H1 (cell line): ENCODE measurements at regions of chr16 and their contacts with region 1.

Region 1: DNA sequence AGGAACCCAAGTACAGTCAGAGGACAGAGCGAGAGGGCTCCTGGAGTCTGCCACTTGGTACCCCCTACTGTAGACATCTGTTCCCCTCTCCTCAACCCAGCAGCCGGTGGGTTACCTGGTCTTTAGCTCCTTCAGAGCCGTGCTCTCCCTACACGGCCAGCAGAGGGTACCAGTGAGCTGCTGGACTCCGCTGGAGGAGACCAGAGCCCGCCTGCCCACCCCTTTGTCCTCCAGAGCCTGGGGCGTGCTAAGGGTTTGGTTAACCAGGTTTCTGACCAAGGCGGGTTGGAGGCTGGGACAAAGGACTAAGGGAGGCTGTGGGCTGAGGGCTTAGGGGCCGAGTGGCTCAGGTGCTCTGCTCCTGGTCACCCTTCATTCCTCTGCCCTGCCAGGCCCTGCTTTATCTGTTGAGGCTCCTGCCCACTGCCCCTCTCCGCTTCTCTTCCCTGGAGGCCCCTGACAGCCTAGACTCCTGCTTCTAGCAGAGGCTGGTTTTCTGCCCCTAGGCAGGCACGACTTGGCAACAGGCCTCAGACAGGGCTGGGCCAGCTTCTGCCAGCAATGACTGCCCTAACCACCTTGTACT is 2.7 kb upstream of the HSD11B2 start:
- DNase-seq: peak; percentile 71 to 90
- H3K4me3 ChIP-seq: no peak overlapping the region
- H3K27ac ChIP-seq: no peak overlapping the region
- H3K4me1 ChIP-seq: peaks cover 21 to 57% (median 45%) of the 10 kb centered on the region in 4 experiments
- H3K27me3 ChIP-seq: peaks cover 0 to 19% (median 15%) of the 10 kb centered on the region in 4 experiments; a peak in 6 of 7 replicates
- CTCF ChIP-seq: peak; percentile 96
- EP300 ChIP-seq: no peak
- POLR2A ChIP-seq: no peak
- RAD21 ChIP-seq: peak; percentile 78 to 89

Region 2: DNA sequence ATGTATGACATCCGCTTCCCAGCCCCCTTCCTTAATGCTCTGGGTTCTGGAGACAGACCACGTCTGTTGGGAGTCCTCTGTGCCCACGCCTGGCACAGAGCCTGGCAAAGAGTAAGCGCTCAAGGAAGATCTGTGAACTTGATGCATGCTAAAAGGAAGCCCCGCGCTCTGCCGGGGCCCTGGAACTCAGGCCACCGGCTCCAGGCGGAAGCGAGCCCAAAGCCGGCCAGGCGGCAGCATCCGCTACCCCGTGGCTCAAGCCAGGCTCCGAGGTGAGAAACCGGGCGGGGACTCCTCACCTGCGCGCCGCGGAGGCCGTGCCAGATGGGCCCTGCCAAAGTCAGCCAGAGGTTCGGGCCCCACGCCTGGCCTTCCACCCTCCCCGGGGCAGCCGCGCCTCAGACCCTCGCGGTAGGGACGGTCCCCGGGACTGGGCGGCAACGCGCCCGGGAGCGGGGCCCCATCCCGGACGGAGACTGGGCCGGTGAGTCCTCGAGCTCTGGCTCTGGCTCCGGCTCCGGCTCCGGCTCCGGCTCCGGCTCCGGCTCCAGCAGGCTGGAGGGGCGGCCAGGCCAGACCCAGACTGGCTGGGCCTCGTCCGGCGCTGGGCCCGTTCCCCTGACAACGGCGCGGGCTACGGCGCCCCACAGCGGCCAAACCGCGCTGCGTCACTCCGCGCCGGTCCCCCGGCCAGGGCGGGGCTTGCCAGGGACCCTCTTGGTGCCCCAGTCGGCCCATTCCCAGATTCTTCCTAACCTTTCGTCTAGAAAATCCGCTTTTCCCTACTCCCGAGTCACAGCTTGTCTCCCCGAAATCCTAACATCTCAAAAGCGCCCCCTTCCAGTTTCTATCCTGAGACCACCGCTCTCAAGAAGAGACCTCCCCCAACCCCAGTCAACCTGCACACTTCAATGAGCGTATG is 12.1 kb before region 1 on chr16 and contains the start of gene ZDHHC1:
- CTCF ChIA-PET with region 1: interaction called, 476 read pairs
- POLR2A ChIA-PET with region 1: interaction called, 16 read pairs
- DNase-seq: peak in 1 of 2 experiments; percentile 94
- H3K4me3 ChIP-seq: peak within 1 kb of the TSS; percentile 40 to 66 (median 54)
- H3K27ac ChIP-seq: no peak within 1 kb of the TSS
- H3K4me1 ChIP-seq: peaks cover 0 to 10% (median 5%) of the 10 kb centered on the region in 4 experiments; a peak in 4 of 7 replicates
- H3K27me3 ChIP-seq: no peaks in the 10 kb centered on the region; a peak in 2 of 7 replicates
- CTCF ChIP-seq: peak; percentile 62 to 77 (median 66)
- EP300 ChIP-seq: no peak
- POLR2A ChIP-seq: peak in 1 of 2 experiments; percentile 37; a peak in 1 of 3 replicates
- RAD21 ChIP-seq: peak; percentile 54 to 65
- total RNA-seq, gene ZDHHC1: 3.1 and 3.5 TPM in 2 replicates

Region 3: GRCh38 chr16:67447508-67448076 is 19.4 kb after region 1 on chr16:
- CTCF ChIA-PET with region 1: interaction called, 683 read pairs
- POLR2A ChIA-PET with region 1: interaction called, 67 read pairs
- DNase-seq: peak in 1 of 2 experiments; percentile 77
- H3K4me3 ChIP-seq: no peak overlapping the region
- H3K27ac ChIP-seq: no peak overlapping the region
- H3K4me1 ChIP-seq: peaks cover 0 to 8% (median 4%) of the 10 kb centered on the region in 4 experiments; a peak in 5 of 7 replicates
- H3K27me3 ChIP-seq: no peaks in the 10 kb centered on the region
- CTCF ChIP-seq: peak; percentile 57 to 63 (median 59)
- EP300 ChIP-seq: no peak
- POLR2A ChIP-seq: no peak
- RAD21 ChIP-seq: peak; percentile 40 to 66; a peak in 3 of 4 replicates

Region 4: DNA sequence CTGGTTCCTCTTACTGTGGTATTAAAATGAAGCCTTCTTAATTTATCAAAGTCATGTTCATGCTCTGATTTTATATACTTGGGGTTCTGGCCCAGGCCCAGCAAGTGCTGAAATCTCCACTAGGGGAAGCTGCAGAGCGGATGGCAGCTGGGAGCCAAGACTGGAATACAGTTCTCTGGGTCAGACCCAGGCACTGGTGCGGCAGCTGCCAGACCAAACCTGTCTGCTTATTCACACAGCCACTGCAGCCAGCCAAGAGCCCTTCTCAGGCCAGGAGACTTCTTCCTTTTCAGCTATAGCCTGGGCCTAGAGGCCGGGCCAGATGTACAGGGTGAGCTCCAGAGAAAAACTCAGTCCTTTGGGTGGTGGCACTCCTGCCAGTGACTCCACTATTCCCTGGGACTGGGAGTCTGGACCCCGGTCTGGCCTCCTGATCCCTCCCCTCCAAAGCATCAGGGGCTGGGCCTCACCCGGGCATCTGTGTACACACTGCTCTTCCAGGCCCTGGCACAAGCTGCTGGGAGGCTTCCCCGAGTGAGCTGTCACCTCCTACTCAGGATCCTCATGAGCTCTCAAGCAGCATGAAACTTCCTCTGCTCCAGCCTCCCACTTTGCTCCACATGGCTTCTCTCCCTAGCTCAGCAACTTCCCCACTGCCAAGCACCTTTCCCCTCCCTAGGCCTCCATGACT is 28.3 kb after region 1 on chr16:
- CTCF ChIA-PET with region 1: interaction called, 683 read pairs
- POLR2A ChIA-PET with region 1: interaction called, 4 read pairs
- DNase-seq: no peak
- H3K4me3 ChIP-seq: no peak overlapping the region
- H3K27ac ChIP-seq: peak overlapping the region; percentile 22; the same call in 1 of the 2 replicates
- H3K4me1 ChIP-seq: no peaks in the 10 kb centered on the region; a peak in 1 of 7 replicates
- H3K27me3 ChIP-seq: no peaks in the 10 kb centered on the region
- CTCF ChIP-seq: peak; percentile 57 to 65 (median 62)
- EP300 ChIP-seq: no peak
- POLR2A ChIP-seq: no peak
- RAD21 ChIP-seq: peak in 1 of 2 experiments; percentile 46; a peak in 2 of 4 replicates

Region 5: DNA sequence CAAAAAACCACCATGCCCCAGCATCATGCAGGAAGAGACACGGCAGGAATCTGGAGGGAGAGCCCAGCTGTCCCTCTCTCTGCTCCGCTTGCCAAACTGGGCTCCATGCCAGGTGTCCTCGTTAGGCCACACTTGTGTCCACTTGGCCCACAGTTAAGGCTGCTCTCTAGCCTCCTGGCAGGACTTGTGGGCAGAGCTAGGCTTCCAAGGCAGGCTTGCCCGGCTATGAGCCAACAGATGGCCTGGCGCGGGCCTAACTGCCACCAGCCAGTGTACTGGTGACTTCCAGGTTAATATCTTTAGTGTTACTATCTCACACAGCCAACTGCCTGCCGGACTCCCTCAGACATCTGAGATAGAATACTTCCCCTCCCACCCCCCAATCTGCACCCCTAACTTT is 42.1 kb after region 1 on chr16:
- CTCF ChIA-PET with region 1: interaction called, 683 read pairs
- POLR2A ChIA-PET with region 1: interaction called, 4 read pairs
- DNase-seq: no peak
- H3K4me3 ChIP-seq: no peak overlapping the region
- H3K27ac ChIP-seq: no peak overlapping the region
- H3K4me1 ChIP-seq: peaks cover 0 to 5% (median 2%) of the 10 kb centered on the region in 4 experiments; a peak in 3 of 7 replicates
- H3K27me3 ChIP-seq: no peaks in the 10 kb centered on the region
- CTCF ChIP-seq: no peak
- EP300 ChIP-seq: no peak
- POLR2A ChIP-seq: no peak
- RAD21 ChIP-seq: no peak